ENCODE measurements at regions of chrX and their contacts with region 1.

Region 1: DNA sequence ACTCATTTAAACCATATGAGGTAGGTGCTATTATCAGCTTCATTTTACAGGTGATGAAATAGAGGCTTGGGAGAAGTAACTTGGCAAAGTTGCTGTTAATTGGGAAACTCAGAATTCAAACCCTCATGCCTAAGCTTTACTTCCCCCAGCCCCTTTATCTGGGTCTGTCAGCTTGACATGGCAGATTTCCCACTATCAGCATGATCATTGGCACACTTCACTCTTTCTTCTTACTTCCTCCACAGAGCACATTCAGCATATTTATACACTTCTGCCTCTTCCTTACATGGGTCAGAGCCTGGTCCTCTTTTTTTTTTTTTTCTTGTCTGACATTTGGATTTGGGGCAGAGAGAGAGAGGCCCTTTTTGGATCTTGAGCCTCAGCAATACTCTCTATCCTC is 56.5 kb upstream of the ARX start:
- DNase-seq: no peak

Region 2: GRCh38 chrX:24647257-24648058 is 424.8 kb before region 1 on chrX and contains the start of gene PCYT1B:
- intact Hi-C with region 1: no loop called
- DNase-seq: peak; percentile 42 to 94 (median 64)

Region 3: DNA sequence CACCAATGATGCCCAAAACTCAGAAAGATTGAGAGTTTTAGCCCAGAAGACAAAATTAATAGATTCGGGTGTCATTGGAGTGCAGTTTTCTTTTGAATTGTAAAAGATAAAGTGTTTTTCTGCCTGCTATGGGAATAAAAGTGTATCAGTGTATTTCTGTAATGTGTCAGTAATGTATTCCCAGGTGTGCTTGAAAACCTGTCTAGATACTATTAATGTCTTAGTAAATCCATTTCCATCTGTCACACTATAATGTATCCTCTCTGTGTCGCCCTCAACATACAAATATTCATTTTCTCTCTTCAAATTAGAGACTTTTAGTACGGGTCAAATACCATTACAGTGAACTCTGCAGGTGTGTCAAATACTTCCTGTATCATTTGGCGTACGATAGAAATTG is 13.0 kb before region 1 on chrX:
- intact Hi-C with region 1: no loop called
- DNase-seq: no peak

Region 4: GRCh38 chrX:25131055-25131454 is 58.8 kb after region 1 on chrX:
- intact Hi-C with region 1: loop called (anchors 2 kb)
- DNase-seq: no peak

Measured in posterior cingulate gyrus (tissue), 11 donors.